ENCODE measurements at regions of chr22 and their contacts with region 1.

Region 1: GRCh38 chr22:19629720-19630419 is 84.4 kb upstream of the SEPTIN5 start:
- ATAC-seq: peak; percentile 90 to 99 (median 95)
- H3K4me3 ChIP-seq: no peak overlapping the region
- H3K27ac ChIP-seq: peak overlapping the region in 1 of 2 donors; percentile 35
- H3K4me1 ChIP-seq: peaks cover 23 to 26% of the 10 kb centered on the region in 2 donors

Region 2: DNA sequence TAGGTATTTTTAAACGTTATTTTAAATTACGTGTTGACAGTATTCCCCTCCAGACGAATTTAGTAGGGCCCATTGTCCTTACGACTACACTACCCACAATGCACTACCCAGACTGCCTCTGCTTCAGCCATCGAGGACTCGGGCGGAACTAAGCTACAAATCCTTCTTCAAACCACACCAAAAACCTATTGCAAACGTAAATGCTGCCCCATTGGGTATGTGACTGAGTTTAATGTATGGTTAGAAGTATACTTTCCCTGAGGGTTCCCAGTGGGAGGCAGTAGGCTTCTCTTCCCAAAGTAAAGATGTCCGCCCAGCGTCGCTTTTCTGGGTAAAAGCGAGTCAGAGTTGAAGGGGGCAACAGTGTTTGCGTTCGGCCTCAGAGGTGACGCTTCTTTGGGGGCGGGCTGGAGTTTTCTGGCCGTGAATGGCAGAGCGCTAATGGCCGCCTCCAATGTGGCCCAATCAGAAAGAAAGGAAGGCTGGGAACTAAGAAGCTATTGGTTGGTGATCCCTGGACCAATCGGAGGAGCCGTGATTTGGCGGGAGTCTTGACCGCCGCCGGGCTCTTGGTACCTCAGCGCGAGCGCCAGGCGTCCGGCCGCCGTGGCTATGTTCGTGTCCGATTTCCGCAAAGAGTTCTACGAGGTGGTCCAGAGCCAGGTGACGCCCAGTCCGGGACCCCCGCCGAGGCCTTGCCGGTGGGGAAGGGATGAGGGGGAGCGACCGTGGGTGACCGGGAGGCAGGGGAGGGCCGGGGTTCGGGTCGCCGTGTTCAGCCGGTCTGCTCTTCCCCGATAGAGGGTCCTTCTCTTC is 150.3 kb before region 1 on chr22 and contains the start of gene CDC45:
- in situ Hi-C with region 1: loop called in 1 of 9 experiments (anchors 10 kb)
- ATAC-seq: peak; percentile 87 to 95 (median 94)
- H3K4me3 ChIP-seq: peak within 1 kb of the TSS; percentile 46 to 79 (median 56)
- H3K27ac ChIP-seq: peak within 1 kb of the TSS; percentile 97 to 99
- H3K4me1 ChIP-seq: peaks cover 5 to 6% of the 10 kb centered on the region in 2 donors
- total RNA-seq, gene CDC45: 0.60 to 28.7 (median 1.2) TPM

Region 3: DNA sequence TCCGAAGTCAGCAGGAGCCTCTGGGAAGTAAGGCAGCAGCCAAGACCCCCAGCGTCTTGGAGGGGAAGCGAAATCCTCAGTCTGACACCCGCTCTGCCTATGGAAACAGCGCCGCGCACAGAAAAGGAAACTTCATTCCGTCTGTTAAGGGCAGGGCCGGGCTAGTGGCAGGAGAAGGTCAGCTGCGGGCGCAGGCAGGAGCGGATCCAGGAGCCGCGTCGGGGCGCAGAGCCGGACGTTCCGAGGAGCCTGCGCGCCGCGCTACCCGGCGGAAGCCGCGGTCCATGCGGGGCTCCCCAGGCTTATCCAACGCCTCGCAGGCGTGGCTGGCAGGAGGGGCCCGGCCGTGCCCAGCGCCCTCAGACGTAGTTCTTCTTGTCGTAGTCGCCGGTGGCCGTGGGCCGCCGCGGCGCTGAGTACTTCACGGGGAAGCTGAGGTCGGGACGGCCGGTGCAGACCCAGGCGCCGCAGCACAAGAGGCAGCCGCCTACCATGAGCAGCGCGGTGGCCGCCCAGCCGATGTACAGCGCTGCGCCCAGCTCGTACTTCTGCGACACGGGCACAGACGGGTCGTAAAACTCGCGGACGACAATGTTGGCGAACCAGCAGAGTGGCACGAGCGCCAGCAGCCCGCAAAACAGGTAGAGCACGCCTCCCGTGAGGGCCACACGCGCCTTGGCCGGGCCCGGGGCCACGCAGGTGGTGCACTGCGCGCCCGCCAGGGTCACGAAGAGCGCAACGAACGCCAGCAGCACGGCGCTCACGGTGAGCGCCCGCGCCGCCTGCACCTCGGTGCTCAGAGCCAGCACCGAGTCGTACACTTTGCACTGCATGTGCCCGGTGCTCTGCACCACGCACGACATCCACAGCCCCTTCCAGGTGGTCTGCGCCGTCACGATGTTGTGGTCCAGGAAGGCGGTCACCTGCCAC is 106.4 kb before region 1 on chr22:
- in situ Hi-C with region 1: loop called in 1 of 9 experiments (anchors 25 kb)
- ATAC-seq: peak; percentile 6 to 79 (median 54)
- H3K4me3 ChIP-seq: peak overlapping the region; percentile 26 to 35 (median 30)
- H3K27ac ChIP-seq: no peak overlapping the region
- H3K4me1 ChIP-seq: peaks cover 0 to 15% of the 10 kb centered on the region in 2 donors

Region 4: DNA sequence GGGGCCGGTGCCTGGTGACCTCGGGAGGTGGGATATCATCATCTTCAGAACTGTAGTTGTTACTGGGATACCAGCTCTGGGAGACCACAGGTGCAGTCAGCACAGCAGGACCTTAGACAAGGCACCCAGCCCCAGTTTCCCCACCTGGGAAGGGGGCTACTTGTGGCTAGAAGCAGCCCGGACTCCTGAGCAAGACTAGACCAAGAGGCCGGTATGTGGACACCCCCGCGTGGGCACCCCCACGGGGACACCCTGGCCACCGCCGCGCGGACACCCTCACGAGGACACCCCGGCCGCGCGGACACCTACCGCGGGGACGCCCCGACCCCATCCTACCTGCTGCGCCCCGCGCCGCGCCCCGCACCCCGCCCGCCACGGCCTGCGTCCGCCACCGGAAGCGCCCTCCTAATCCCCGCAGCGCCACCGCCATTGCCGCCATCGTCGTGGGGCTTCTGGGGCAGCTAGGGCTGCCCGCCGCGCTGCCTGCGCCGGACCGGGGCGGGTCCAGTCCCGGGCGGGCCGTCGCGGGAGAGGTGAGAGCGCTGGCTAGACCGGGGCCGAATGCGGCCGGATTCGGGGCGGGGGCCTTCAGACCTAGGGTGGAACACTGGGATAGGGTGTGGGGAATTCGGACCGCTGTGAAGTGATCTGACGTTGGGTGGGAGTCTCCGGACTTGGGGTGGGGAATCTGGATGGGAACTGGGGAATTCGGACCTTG is 311.7 kb after region 1 on chr22 and contains the starts of genes COMT and TXNRD2:
- in situ Hi-C with region 1: no loop called
- ATAC-seq: peak; percentile 62 to 90 (median 78)
- H3K4me3 ChIP-seq: peak within 1 kb of the TSS; percentile 25 to 68 (median 52)
- H3K27ac ChIP-seq: peak within 1 kb of the TSS; percentile 67 to 79
- H3K4me1 ChIP-seq: peaks cover 21% of the 10 kb centered on the region in 2 donors
- total RNA-seq, gene COMT: 22.7 to 99.4 (median 40.8) TPM
- total RNA-seq, gene TXNRD2: 2.4 to 33.9 (median 9.9) TPM

Measured in motor neuron (in vitro differentiated cells).